MCF 10A (cell line): ENCODE measurements at regions of chr2 and their contacts with region 1.

Region 1: GRCh38 chr2:41709702-41710599 is 337.9 kb upstream of the PKDCC start:
- DNase-seq: peak; percentile 80
- H3K4me3 Mint-ChIP-seq: peak overlapping the region; percentile 64
- H3K27ac Mint-ChIP-seq: peak overlapping the region; percentile 76
- H3K4me1 Mint-ChIP-seq: peaks cover 18% of the 10 kb centered on the region
- H3K27me3 Mint-ChIP-seq: no peaks in the 10 kb centered on the region
- CTCF ChIP-seq: no peak

Region 2: GRCh38 chr2:41610501-41611190 is 99.3 kb before region 1 on chr2:
- CTCF ChIA-PET with region 1: no interaction called
- POLR2A ChIA-PET with region 1: no interaction called
- intact Hi-C with region 1: no loop called
- DNase-seq: no peak
- H3K4me3 Mint-ChIP-seq: no peak overlapping the region
- H3K27ac Mint-ChIP-seq: no peak overlapping the region
- H3K4me1 Mint-ChIP-seq: no peaks in the 10 kb centered on the region
- H3K27me3 Mint-ChIP-seq: no peaks in the 10 kb centered on the region
- CTCF ChIP-seq: no peak

Region 3: DNA sequence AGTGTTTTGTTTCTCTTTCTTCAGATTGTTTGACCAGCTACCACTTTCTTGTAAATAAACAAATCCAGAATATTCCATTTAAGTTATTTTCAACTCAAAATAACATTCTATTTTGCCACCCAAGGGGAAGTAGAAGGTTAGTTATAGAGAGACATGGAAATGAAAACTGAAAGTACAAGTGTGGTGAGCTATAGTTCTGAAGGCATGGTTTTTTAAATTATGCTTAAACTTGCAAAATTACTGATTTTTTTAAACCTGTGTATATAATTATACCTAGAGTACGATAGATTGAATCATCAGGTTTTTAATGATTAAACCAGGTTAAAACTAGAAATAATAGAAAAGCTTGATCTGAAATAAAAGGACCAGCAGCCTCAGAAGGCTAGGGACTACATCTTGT is 10.4 kb after region 1 on chr2:
- CTCF ChIA-PET with region 1: interaction called, 4 read pairs
- POLR2A ChIA-PET with region 1: interaction called, 28 read pairs
- intact Hi-C with region 1: no loop called
- DNase-seq: no peak
- H3K4me3 Mint-ChIP-seq: no peak overlapping the region
- H3K27ac Mint-ChIP-seq: no peak overlapping the region
- H3K4me1 Mint-ChIP-seq: peaks cover 47% of the 10 kb centered on the region
- H3K27me3 Mint-ChIP-seq: no peaks in the 10 kb centered on the region
- CTCF ChIP-seq: no peak